ENCODE measurements at regions of chr6 and their contacts with region 1.

Region 1: DNA sequence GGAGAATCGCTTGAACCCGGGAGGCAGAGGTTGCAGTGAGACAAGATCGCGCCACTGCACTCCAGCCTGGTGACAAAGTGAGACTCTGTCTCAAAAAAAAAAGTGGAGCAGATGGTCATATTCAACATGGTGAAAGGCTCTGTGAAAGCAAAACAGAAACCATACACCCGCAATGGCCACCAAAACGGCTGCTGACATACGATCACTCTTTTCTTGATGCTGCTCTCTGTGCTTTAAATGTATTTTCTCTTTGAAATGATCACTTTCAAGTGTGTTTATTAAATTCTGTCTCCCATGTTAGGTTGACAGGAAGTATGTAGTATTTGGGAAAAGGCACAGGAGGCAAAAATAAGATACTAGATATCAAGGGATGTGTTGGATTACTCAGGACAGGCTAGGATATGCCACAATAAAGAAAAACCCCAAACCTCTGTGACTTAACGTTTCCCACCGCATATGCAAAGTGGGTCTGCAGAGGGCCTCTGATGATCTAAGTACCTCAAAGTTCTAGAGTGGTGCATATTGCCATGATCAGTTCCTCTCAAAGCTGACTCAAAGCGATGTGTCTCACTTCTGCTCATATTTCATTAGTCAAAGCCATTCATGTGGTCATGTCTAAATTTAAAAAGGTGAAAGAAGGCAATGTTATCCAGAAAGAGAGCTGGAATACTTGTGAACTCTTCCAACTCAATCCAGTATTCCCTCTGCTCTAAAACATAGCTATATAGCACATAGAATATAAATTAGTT is 155.1 kb upstream of the SOX4 start:
- DNase-seq: peak; percentile 40
- H3K4me3 Mint-ChIP-seq: peak overlapping the region; percentile 72
- H3K27ac Mint-ChIP-seq: peak overlapping the region; percentile 86
- H3K4me1 Mint-ChIP-seq: peaks cover 20% of the 10 kb centered on the region
- H3K27me3 Mint-ChIP-seq: peaks cover 11% of the 10 kb centered on the region

Region 2: DNA sequence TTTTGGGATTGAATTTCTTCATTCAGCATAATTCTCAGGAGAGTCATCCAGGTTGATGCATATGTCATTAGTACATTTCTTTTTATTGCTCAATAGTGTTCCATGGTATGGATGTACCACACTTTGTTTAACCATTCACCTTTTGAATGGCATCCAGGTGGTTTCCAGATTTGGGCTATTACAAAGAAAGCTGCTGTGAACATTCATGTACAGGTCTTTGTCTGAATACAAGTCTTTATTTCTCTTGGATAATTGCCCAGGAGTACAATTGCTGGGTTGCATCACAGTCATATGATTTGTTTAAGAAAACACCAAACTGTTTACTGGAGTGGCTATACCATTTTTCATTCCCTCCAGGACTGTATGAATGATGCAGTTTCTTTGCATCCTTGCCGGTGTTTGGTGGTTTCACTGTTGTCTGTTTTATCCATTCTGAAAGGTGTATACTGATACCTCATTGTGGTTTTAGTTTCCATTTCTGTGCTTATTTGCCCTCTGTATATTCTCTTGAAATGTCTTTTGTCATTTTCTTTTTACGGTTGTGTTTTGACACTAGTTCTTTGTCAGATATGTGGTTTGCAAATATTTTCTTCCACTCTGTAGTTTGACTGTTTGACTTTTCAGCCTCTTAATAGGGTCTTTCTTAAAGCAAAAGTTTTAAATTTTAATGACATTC is 895.3 kb before region 1 on chr6:
- intact Hi-C with region 1: loop called (anchors 1 kb)
- DNase-seq: peak; percentile 35
- H3K4me3 Mint-ChIP-seq: peak overlapping the region; percentile 66
- H3K27ac Mint-ChIP-seq: peak overlapping the region; percentile 91
- H3K4me1 Mint-ChIP-seq: peaks cover 50% of the 10 kb centered on the region
- H3K27me3 Mint-ChIP-seq: no peaks in the 10 kb centered on the region

Region 3: DNA sequence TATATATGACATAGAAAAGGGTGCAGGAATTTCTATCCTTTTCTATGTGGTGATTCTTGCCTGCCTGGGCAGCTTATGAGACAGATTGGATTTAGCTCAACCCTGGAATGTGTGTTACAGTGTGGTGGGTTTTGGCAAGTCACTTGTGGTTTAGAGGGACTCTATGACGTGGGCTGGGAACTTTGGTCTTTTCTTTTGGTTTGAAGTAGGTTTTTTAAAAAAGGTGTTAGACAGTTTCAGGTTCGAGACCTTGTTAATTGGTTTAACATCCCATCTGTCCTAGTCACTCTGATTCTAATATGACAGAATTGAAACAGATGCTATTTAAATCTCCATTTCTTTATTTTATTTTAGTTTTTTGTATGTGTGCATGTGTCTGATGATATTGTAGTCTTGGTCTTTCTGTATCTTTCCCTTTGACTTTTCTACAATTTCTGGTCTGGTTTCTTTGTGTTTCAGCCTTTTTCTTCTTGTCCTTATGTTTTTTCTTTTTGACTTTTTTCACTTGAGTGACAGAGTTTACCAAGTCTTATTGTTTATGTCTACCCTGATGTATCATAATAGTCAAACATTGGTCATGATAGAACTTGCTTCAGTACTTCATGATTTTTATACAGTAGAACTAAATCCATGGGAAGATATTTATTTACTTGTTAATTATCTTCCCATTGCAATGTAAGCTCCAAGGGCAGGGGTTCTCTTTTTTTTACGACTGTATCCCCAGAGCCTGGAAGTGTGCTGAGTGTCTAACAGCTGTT is 729.9 kb before region 1 on chr6:
- intact Hi-C with region 1: loop called (anchors 1 kb)
- DNase-seq: no peak
- H3K4me3 Mint-ChIP-seq: no peak overlapping the region
- H3K27ac Mint-ChIP-seq: peak overlapping the region; percentile 75
- H3K4me1 Mint-ChIP-seq: peaks cover 43% of the 10 kb centered on the region
- H3K27me3 Mint-ChIP-seq: no peaks in the 10 kb centered on the region

Region 4: DNA sequence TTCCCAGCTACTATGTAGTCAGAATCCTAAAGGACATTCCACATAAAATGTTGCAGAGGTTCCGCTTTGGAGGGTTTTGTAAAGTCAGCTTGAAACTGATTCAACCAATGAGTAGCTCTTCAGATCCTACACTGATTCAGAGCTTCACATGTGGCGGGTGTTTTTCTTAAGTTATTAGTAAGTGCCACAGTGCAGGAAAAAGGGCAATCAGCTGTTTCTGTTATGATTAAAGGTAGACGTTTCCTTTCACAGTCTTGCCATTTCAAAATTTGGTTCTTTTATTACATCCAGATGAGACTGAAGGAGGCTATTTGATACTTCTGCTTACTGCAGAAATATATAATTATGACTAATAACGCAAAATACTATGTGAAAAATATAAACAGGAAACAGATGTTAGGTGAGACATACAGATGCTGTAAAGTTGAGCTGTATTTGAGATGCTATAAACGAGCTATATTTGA is 460.2 kb before region 1 on chr6:
- intact Hi-C with region 1: loop called (anchors 1 kb)
- DNase-seq: no peak
- H3K4me3 Mint-ChIP-seq: no peak overlapping the region
- H3K27ac Mint-ChIP-seq: no peak overlapping the region
- H3K4me1 Mint-ChIP-seq: peaks cover 4% of the 10 kb centered on the region
- H3K27me3 Mint-ChIP-seq: no peaks in the 10 kb centered on the region

Region 5: GRCh38 chr6:21402368-21402767 is 36.0 kb before region 1 on chr6:
- intact Hi-C with region 1: loop called (anchors 1 kb)
- DNase-seq: no peak
- H3K4me3 Mint-ChIP-seq: no peak overlapping the region
- H3K27ac Mint-ChIP-seq: peak overlapping the region; percentile 40
- H3K4me1 Mint-ChIP-seq: peaks cover 15% of the 10 kb centered on the region
- H3K27me3 Mint-ChIP-seq: peaks cover 7% of the 10 kb centered on the region

Region 6: GRCh38 chr6:22068561-22069305 is 630.3 kb after region 1 on chr6:
- intact Hi-C with region 1: loop called (anchors 1 kb)
- DNase-seq: no peak
- H3K4me3 Mint-ChIP-seq: no peak overlapping the region
- H3K27ac Mint-ChIP-seq: peak overlapping the region; percentile 6
- H3K4me1 Mint-ChIP-seq: peaks cover 19% of the 10 kb centered on the region
- H3K27me3 Mint-ChIP-seq: peaks cover 2% of the 10 kb centered on the region

Measured in activated T-helper 1 cell treated with anti-CD3 and anti-CD28 coated beads, Interleukin-12 subunit alpha, Interleukin-12 subunit beta, Interleukin-2, Interleukin-4 antibody, amounts not matched to agents 30 ng/mL and 10 ng/mL and 1 ng/mL, durations not matched to agents 14 hours and 24 hours and 36 hours (primary cell).